ENCODE measurements at regions of chr1 and their contacts with region 1.

Region 1: GRCh38 chr1:109426278-109427170 is at the start of gene PSMA5:
- DNase-seq: peak; percentile 98
- H3K4me3 Mint-ChIP-seq: peak within 1 kb of the TSS; percentile 93
- H3K27ac Mint-ChIP-seq: peak within 1 kb of the TSS; percentile 98
- H3K4me1 Mint-ChIP-seq: peaks cover 38% of the 10 kb centered on the region
- H3K27me3 Mint-ChIP-seq: no peaks in the 10 kb centered on the region
- total RNA-seq, gene PSMA5: 217 to 218 TPM

Region 2: GRCh38 chr1:108913105-108913948 is 513.2 kb before region 1 on chr1:
- CTCF ChIA-PET with region 1: no interaction called
- POLR2A ChIA-PET with region 1: no interaction called
- intact Hi-C with region 1: no loop called
- DNase-seq: no peak
- H3K4me3 Mint-ChIP-seq: no peak overlapping the region
- H3K27ac Mint-ChIP-seq: no peak overlapping the region
- H3K4me1 Mint-ChIP-seq: no peaks in the 10 kb centered on the region
- H3K27me3 Mint-ChIP-seq: no peaks in the 10 kb centered on the region

Region 3: GRCh38 chr1:109213785-109214468 is 212.6 kb before region 1 on chr1 and contains the start of gene SARS1:
- CTCF ChIA-PET with region 1: no interaction called
- POLR2A ChIA-PET with region 1: interaction called, 18 read pairs
- intact Hi-C with region 1: loop called (anchors 2 kb)
- DNase-seq: peak; percentile 92
- H3K4me3 Mint-ChIP-seq: peak within 1 kb of the TSS; percentile 98
- H3K27ac Mint-ChIP-seq: peak within 1 kb of the TSS; percentile 97
- H3K4me1 Mint-ChIP-seq: peaks cover 31% of the 10 kb centered on the region
- H3K27me3 Mint-ChIP-seq: no peaks in the 10 kb centered on the region
- total RNA-seq, gene SARS1: 245 to 251 TPM

Region 4: DNA sequence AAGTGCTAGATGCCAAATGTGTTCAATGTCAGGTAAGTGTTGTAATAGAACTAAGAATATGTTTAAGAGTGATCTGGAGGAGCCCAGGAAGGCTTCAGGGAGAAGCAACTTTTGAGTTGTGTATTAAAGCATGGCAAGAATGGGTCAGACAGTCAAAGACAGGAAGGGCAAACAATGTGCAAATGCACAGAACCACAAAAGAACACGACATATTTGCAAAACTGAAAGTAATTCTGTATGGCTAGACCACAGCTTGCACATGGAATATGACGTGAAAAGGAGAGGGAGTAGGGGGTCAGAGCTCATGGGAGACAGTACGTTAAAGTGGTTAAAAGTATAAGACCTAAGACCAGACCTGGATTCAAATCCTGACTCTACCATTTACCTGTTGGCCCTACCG is 21.7 kb before region 1 on chr1:
- CTCF ChIA-PET with region 1: interaction called, 3 read pairs
- POLR2A ChIA-PET with region 1: interaction called, 3 read pairs
- intact Hi-C with region 1: loop called (anchors 2 kb)
- DNase-seq: no peak
- H3K4me3 Mint-ChIP-seq: no peak overlapping the region
- H3K27ac Mint-ChIP-seq: peak overlapping the region; percentile 38
- H3K4me1 Mint-ChIP-seq: peaks cover 24% of the 10 kb centered on the region
- H3K27me3 Mint-ChIP-seq: no peaks in the 10 kb centered on the region

Region 5: DNA sequence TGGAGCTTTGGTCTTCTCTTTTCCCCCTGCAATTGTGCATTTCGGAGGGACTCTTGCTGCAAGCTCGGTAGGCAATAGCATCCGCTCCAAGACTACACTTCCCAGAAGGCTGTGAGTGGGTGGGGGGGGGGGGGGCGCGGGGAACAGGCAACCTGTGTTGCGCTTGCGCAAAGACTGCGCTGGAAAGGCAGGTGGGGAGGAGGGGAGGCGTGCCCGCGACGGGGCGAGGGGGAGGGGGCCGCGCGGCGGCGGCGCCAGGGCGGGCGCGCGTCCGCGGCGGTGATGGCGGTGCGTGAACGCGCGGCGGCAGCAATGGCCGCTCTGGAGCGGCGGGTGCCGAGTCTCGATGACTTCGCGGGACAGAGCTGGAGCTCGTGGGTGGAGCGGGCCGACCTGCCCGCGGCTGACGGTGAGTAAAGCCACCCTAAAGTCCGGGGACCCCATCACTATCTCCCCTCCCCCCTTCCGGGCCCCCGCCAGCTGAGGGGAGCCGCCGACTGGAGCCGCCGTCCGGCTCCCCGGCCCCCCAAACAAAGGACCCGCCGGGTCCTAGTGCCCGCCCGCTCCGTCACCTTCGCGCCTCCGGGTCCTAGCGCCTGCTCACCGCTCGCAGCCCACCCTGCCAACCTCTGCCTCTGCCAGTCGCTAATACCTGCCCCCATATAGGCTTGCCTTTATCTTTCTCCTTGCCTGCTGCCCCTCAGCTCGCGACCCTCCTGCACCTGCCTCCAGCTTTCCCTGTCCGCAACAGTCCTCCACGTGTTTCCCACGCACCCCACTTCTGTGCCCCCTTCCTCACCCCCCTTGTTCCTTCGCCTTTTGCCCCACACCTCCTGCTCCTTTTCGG is 57.4 kb after region 1 on chr1 and contains the start of gene ATXN7L2:
- CTCF ChIA-PET with region 1: interaction called, 7 read pairs
- POLR2A ChIA-PET with region 1: interaction called, 36 read pairs
- intact Hi-C with region 1: loop called (anchors 1 kb)
- DNase-seq: peak; percentile 95
- H3K4me3 Mint-ChIP-seq: peak within 1 kb of the TSS; percentile 90
- H3K27ac Mint-ChIP-seq: peak within 1 kb of the TSS; percentile 88
- H3K4me1 Mint-ChIP-seq: peaks cover 28% of the 10 kb centered on the region
- H3K27me3 Mint-ChIP-seq: no peaks in the 10 kb centered on the region
- total RNA-seq, gene ATXN7L2: 10.7 to 11.1 TPM

Region 6: DNA sequence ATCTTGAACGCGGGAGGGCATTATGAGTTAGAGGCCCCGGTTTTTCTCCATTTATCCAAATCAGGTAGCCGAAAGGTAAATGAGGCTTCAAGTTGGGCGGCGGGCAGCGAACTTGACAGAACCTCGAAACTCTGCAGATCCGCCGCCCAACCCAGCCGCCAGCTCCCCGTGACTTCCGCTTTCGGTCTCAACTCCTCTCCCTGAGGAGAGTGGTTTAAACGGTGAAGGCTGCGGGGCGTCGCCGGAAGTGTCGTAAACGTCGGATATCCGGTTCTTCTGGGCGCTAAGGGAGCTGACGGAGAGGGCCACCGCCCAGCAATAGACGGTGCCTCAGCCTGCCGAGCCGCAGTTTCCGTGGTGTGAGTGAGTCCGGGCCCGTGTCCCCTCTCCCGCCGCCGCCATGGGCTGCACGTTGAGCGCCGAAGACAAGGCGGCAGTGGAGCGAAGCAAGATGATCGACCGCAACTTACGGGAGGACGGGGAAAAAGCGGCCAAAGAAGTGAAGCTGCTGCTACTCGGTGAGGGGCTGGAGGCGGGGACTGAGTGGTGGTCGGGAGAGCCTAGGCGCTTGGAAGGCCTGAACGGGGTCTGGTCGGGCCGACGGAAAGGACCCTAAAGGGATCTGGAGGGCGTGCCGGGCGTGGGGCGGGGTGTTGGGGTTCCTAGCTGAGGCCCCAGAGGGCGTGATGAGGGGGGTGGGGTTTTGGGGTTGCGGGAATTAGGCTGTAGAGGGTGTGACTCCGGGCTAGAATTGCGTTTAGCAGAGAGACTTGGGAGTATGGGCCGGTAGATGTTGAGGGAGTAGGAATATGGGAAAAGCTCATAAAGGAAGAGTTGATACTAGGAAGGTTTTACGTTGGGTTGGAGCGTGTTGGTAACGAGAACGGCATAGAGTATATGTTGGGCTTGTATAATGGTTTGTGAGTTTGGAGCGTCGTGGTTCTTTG is 122.1 kb after region 1 on chr1 and contains the start of gene GNAI3:
- CTCF ChIA-PET with region 1: interaction called, 3 read pairs
- POLR2A ChIA-PET with region 1: interaction called, 8 read pairs
- intact Hi-C with region 1: loop called (anchors 1 kb)
- DNase-seq: peak; percentile 98
- H3K4me3 Mint-ChIP-seq: peak within 1 kb of the TSS; percentile 86
- H3K27ac Mint-ChIP-seq: peak within 1 kb of the TSS; percentile 94
- H3K4me1 Mint-ChIP-seq: peaks cover 41% of the 10 kb centered on the region
- H3K27me3 Mint-ChIP-seq: no peaks in the 10 kb centered on the region
- total RNA-seq, gene GNAI3: 9.2 to 9.9 TPM

Region 7: DNA sequence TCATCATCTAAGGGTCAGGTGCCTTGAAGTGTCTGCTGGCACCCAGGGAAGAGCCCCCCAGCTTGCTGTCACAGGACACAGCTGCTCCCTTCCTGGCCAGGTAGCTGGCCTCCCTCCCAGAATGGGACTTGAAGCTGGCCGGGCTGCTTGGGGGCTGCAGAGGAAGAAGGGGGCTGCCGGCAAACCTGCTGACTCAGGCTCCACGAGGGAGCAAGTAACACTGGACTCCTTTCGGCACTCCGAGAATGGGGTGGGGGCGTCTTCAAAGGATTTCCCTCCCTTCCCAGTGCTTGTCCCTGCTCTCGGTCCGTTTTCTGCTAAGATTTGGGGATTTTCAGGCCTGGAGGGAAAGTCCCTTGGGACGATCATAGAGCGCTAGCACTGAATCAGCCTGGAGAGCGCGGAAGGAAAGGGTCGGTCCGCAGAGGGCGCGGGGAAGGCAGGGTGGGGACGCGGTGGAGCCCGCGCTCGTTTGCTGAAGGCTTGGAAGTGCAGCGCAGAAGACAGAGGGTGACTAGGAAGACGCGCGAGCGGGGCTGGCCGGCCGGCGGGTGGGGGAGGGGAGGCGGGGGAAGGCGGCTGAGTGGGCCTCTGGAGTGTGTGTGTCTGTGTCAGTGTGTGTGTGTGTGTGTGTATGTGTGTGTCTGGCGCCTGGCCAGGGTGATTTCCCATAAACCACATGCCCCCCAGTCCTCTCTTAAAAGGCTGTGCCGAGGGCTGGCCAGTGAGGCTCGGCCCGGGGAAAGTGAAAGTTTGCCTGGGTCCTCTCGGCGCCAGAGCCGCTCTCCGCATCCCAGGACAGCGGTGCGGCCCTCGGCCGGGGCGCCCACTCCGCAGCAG is 483.8 kb after region 1 on chr1 and contains the start of gene CSF1:
- CTCF ChIA-PET with region 1: no interaction called
- POLR2A ChIA-PET with region 1: no interaction called
- intact Hi-C with region 1: loop called (anchors 2 kb)
- DNase-seq: peak; percentile 80
- H3K4me3 Mint-ChIP-seq: peak within 1 kb of the TSS; percentile 88
- H3K27ac Mint-ChIP-seq: peak within 1 kb of the TSS; percentile 89
- H3K4me1 Mint-ChIP-seq: peaks cover 72% of the 10 kb centered on the region
- H3K27me3 Mint-ChIP-seq: no peaks in the 10 kb centered on the region
- total RNA-seq, gene CSF1: 135 to 140 TPM